Endothelial cell of umbilical vein (primary cell): ENCODE measurements at regions of chr6 and their contacts with region 1.

Region 1: DNA sequence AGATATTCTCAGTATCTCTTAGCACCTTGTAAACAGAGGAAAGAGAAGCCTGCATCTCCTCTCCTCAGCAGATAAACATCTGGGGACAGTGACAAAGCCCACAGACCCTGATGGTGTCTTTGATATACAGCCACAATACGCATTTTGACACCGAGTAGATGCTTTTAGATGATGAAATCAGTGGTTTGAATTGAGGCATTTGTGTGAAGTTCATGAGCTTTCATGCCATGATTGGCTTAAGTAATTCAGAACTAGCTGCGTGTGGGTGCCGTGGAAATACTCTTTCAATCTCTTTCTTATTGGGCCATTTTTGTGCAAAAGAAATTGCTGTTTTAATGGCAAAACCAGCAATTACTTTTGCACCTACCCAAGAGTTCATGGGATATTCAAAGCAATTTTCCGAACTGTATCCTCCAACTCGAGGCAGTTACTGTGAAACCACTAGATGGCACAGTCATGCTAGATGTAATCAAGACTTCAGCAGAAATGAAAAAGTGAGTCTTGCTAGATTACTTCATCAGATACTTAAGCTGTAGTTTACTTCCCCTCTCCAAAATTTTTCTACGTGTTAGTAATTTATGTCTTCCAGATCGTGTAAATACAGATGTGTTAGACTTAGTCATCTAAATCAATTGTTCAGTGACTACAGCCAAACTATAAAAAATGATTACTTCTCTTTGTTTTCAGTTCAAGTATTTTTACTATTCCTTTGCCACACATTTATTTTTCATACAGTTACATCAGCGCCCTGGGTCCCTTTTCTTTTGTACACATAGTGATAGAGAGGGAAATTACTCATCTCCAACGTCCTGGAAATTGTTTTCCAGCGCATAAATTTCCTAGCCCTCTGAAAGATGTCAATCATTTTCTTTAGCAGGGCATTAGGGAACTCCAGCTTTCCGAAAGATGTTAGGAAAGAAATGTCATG is 49.4 kb downstream of the IYD start:
- DNase-seq: peak; percentile 91
- H3K4me3 ChIP-seq: peak overlapping the region in 2 of 3 experiments; percentile 30 to 53
- H3K27ac ChIP-seq: peak overlapping the region; percentile 84
- H3K4me1 ChIP-seq: peaks cover 10% of the 10 kb centered on the region
- H3K27me3 ChIP-seq: no peaks in the 10 kb centered on the region
- CTCF ChIP-seq: peak; percentile 64
- POLR2A ChIP-seq: no peak

Region 2: DNA sequence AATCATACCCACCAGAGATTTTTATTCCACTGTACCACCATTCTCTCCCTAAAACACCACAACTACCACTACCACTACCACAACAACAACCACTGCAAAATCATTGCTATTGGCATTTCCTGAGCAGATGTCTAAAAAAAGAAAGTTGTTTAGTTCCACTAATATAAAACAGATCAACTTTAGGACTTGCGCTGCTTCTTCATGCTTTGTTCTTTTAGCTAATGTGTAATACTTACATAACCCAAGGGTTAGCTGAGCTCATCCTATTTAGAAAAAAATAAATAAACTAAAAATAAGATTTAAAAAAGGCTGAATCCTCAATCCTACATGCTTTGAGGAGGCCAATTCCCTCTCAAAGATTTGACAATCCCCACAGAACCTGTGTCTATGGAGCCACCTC is 37.9 kb before region 1 on chr6:
- CTCF ChIA-PET with region 1: no interaction called
- POLR2A ChIA-PET with region 1: no interaction called
- dilution Hi-C with region 1: no loop called
- intact Hi-C with region 1: no loop called
- DNase-seq: no peak
- H3K4me3 ChIP-seq: no peak overlapping the region
- H3K27ac ChIP-seq: no peak overlapping the region
- H3K4me1 ChIP-seq: no peaks in the 10 kb centered on the region
- H3K27me3 ChIP-seq: peaks cover 2 to 5% of the 10 kb centered on the region in 2 experiments
- CTCF ChIP-seq: no peak
- POLR2A ChIP-seq: no peak

Region 3: GRCh38 chr6:150491131-150491810 is 73.1 kb after region 1 on chr6:
- CTCF ChIA-PET with region 1: interaction called, 7 read pairs
- POLR2A ChIA-PET with region 1: no interaction called
- dilution Hi-C with region 1: no loop called
- intact Hi-C with region 1: loop called (anchors 1 kb)
- DNase-seq: no peak
- H3K4me3 ChIP-seq: no peak overlapping the region
- H3K27ac ChIP-seq: no peak overlapping the region
- H3K4me1 ChIP-seq: peaks cover 18% of the 10 kb centered on the region
- H3K27me3 ChIP-seq: no peaks in the 10 kb centered on the region
- CTCF ChIP-seq: no peak
- POLR2A ChIP-seq: no peak

Region 4: GRCh38 chr6:150667977-150668716 is 250.0 kb after region 1 on chr6:
- CTCF ChIA-PET with region 1: interaction called, 8 read pairs
- POLR2A ChIA-PET with region 1: no interaction called
- dilution Hi-C with region 1: no loop called
- intact Hi-C with region 1: loop called (anchors 1 kb)
- DNase-seq: peak; percentile 93
- H3K4me3 ChIP-seq: no peak overlapping the region
- H3K27ac ChIP-seq: peak overlapping the region; percentile 8
- H3K4me1 ChIP-seq: peaks cover 11% of the 10 kb centered on the region
- H3K27me3 ChIP-seq: no peaks in the 10 kb centered on the region
- CTCF ChIP-seq: peak in 1 of 2 donors; percentile 20
- POLR2A ChIP-seq: no peak

Region 5: DNA sequence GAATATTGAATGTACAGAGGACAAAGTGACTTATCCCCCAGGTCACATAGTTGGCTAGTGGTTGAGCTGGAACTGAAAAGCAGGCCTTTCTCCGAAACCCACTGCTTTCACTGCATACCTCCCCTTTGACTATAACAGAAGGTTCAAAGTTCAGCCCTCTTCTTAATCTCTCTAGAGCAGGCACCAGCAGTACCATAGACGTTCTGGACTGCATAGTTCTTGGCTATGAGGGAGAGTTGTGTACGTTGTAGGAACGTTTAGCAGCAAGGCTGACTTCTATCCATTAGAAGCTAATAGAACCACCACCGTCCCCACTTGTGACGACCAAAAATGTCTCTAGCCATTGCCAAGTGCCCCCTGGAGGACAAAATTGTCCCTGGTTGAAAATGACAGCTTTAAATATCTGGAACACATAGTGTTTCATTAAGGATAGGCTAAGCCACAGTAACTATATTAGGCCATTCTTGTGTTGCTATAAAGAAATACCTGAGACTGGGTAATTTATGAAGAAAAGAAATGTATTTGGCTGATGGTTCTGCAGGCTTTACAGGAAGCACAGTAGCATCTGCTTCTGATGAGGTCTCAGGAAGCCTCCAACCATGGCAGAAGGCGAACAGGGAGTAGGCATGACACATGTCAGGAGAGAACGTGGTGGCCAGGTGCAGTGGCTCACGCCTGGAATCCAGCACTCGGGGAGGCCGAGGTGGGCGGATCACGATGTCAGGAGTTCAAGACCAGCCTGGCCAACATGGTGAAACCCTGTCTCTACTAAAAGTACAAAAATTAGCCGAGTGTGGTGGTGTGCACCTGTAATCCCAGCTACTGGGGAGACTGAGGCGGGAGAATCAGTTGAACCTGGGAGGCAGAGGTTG is 323.7 kb after region 1 on chr6:
- CTCF ChIA-PET with region 1: interaction called, 63 read pairs
- POLR2A ChIA-PET with region 1: no interaction called
- dilution Hi-C with region 1: no loop called
- intact Hi-C with region 1: loop called (anchors 1 kb)
- DNase-seq: peak; percentile 31
- H3K4me3 ChIP-seq: no peak overlapping the region
- H3K27ac ChIP-seq: no peak overlapping the region
- H3K4me1 ChIP-seq: no peaks in the 10 kb centered on the region
- H3K27me3 ChIP-seq: no peaks in the 10 kb centered on the region
- CTCF ChIP-seq: peak; percentile 43 to 48
- POLR2A ChIP-seq: no peak

Region 6: DNA sequence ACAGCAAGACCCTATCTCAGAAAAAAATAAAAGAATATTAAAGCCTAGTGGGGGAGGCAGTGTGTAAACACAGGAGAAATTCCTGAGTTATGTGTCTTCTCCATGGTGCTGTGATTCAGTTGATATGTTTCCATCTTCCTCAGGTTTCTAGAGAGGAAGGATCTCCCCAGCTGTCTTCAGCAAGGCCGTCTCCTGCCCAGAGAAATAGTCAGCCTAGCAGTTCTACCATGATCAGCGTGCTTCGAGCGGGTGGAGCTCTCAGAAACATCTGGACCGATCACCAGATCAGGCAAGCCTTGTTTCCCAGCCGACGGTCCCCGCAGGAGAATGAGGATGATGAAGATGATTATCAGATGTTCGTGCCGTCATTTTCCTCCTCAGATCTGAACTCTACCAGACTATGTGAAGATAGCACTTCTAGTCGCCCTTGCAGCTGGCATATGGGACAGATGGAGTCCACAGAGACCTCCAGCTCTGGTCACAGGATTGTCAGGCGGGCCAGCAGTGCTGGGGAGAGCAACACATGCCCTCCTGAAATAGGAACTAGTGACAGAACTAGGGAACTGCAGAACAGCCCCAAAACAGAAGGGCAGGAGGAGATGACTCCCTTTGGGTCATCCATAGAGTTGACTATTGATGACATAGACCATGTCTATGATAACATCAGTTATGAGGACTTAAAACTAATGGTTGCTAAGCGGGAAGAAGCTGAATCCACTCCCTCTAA is 412.4 kb after region 1 on chr6:
- CTCF ChIA-PET with region 1: interaction called, 10 read pairs
- POLR2A ChIA-PET with region 1: no interaction called
- dilution Hi-C with region 1: no loop called
- intact Hi-C with region 1: no loop called
- DNase-seq: no peak
- H3K4me3 ChIP-seq: no peak overlapping the region
- H3K27ac ChIP-seq: no peak overlapping the region
- H3K4me1 ChIP-seq: no peaks in the 10 kb centered on the region
- H3K27me3 ChIP-seq: no peaks in the 10 kb centered on the region
- CTCF ChIP-seq: no peak
- POLR2A ChIP-seq: no peak

Region 7: GRCh38 chr6:150881911-150882481 is 463.8 kb after region 1 on chr6:
- CTCF ChIA-PET with region 1: interaction called, 7 read pairs
- POLR2A ChIA-PET with region 1: no interaction called
- dilution Hi-C with region 1: no loop called
- intact Hi-C with region 1: loop called (anchors 5 kb)
- DNase-seq: peak; percentile 98
- H3K4me3 ChIP-seq: no peak overlapping the region
- H3K27ac ChIP-seq: peak overlapping the region; percentile 91
- H3K4me1 ChIP-seq: peaks cover 36% of the 10 kb centered on the region
- H3K27me3 ChIP-seq: no peaks in the 10 kb centered on the region
- CTCF ChIP-seq: no peak
- POLR2A ChIP-seq: no peak